HCT116 (cell line): ENCODE measurements at regions of chr7 and their contacts with region 1.

Region 1: DNA sequence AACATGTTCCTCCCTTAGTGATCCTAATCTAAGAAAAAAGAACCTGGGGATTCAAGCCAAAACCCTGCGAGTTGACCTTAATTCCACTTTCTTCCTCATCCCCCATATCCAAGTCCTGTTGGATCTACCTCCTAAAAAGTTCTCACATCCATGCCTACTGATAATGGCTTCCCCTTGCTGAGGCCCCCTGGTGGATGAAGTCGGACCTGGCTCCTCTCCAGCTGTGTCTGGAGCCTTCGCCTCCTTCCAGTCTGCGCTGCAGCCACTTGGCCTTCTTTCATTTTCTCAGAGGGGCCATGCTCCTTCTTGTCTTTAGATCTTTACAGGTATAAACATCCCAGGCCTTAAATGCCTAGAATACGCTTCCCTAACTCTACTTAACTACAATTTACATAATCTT is 8.1 kb downstream of the PDE1C start:
- DNase-seq: peak; percentile 23
- ATAC-seq: peak; percentile 80
- H3K4me3 ChIP-seq: no peak overlapping the region
- H3K27ac ChIP-seq: no peak overlapping the region
- H3K4me1 ChIP-seq: no peaks in the 10 kb centered on the region
- H3K27me3 ChIP-seq: peaks cover 16% of the 10 kb centered on the region
- CTCF ChIP-seq: peak; percentile 32 to 77 (median 76); a peak in 5 of 6 replicates
- POLR2A ChIP-seq: no peak
- RAD21 ChIP-seq: peak; percentile 38

Region 2: DNA sequence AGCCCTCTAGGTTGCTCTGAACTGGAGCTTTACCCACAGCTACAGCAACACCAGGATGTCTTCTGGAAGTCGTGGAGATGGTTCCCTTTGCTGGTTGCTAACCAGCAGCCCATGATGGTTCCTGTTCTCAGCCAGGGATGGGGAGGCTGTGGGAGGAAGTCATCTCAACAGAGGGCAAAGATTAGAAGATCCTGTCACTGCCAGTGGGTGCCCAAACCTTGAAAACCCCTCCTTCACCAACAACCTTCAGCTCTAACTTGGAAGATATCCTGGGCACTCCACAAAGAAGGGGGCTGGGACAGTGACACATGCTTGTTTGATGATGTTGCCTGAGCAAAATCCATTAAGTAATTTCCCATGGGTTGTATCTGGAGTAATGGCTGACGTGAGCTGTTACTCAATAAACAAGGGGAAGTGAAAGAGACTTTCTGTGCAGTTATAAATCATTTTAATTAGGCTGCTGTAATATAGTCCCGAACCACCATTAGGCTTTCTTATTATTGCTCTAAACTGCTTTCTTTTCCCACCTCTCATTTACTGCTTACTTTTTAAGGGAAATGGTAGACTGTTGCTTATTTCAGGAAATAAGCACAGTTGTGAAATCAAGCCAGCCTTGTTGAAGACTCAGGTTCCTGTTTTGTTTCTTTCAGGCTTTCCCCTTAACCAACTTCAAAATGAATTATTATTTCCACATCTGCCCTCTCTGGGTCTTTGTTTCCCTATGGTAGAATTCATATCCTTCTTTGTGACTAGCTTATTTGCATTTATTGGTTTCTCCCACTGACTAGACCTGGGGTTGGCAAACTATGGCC is 250.3 kb before region 1 on chr7:
- CTCF ChIA-PET with region 1: no interaction called
- POLR2A ChIA-PET with region 1: no interaction called
- RAD21 ChIA-PET with region 1: no interaction called
- intact Hi-C with region 1: loop called (anchors 10 kb)
- DNase-seq: no peak
- ATAC-seq: no peak
- H3K4me3 ChIP-seq: no peak overlapping the region
- H3K27ac ChIP-seq: no peak overlapping the region
- H3K4me1 ChIP-seq: no peaks in the 10 kb centered on the region
- H3K27me3 ChIP-seq: no peaks in the 10 kb centered on the region
- CTCF ChIP-seq: no peak
- POLR2A ChIP-seq: no peak
- RAD21 ChIP-seq: no peak

Region 3: DNA sequence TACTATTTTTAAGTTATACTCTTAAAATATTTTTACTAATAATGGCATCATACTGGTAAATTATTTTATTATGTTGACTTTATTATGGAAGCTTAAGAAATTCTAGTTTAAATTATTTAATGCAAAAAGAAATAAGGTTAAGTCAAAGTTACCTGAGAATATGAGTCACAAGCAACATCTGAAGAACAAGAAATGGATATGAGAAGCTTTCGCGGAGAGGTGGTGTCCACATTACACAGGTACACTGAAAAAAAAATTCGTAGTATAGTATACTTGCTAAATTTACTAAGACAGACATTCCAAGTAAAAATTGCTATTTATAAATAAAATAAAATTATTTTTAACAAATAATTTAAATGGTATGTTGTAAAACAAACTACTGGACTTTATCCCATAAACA is 577.0 kb after region 1 on chr7:
- CTCF ChIA-PET with region 1: no interaction called
- POLR2A ChIA-PET with region 1: no interaction called
- RAD21 ChIA-PET with region 1: no interaction called
- intact Hi-C with region 1: no loop called
- DNase-seq: no peak
- ATAC-seq: no peak
- H3K4me3 ChIP-seq: no peak overlapping the region
- H3K27ac ChIP-seq: no peak overlapping the region
- H3K4me1 ChIP-seq: no peaks in the 10 kb centered on the region
- H3K27me3 ChIP-seq: no peaks in the 10 kb centered on the region
- CTCF ChIP-seq: no peak
- POLR2A ChIP-seq: no peak
- RAD21 ChIP-seq: no peak